Transverse colon (tissue), 4 donors: ENCODE measurements at regions of chr16 and their contacts with region 1.

Region 1: DNA sequence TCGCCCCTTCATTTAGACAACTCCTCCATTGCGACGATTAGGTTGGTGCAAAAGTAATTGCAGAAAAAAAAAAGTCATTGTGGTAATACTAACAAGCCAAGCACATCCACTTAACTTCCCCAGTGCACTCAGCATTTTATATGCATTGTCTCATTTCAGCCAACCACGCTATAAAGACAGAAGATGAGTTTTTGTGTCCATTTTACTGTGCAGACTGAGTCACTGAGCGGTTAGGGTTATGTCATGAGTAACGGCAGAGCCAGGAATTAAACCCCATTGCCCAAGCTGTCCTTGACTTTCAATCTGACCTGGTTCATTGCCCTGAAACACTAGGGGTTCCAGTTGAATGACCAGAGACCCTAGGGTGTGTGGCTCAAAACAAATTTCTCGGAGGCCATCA is 218.7 kb downstream of the XYLT1 start:
- DNase-seq: no peak
- H3K4me3 ChIP-seq: no peak overlapping the region
- H3K27ac ChIP-seq: no peak overlapping the region
- H3K4me1 ChIP-seq: no peaks in the 10 kb centered on the region
- H3K27me3 ChIP-seq: no peaks in the 10 kb centered on the region
- CTCF ChIP-seq: no peak
- EP300 ChIP-seq: no peak
- POLR2A ChIP-seq: no peak

Region 2: DNA sequence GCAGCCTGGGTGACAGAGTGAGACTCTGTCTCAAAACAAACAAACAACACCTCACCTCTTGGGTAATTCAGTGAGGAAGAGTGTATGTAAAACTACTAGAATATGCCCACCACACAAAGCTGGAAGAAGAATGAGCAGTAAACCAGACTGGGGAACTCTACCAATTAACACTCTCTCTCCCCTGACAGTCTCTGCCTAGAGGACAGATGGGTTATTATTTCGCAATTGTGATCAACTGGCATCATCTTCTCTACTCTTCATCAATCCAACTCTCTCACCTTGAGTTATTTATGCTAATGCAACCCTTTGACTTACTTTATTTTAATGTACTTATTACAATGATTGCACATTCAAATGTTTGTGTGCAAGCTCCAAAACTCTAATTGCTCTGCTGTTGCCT is 13.1 kb after region 1 on chr16:
- in situ Hi-C with region 1: no loop called
- intact Hi-C with region 1: loop called (anchors 1 kb)
- DNase-seq: no peak
- H3K4me3 ChIP-seq: no peak overlapping the region
- H3K27ac ChIP-seq: no peak overlapping the region
- H3K4me1 ChIP-seq: peaks cover 7 to 49% (median 39%) of the 10 kb centered on the region in 4 donors
- H3K27me3 ChIP-seq: no peaks in the 10 kb centered on the region
- CTCF ChIP-seq: no peak
- EP300 ChIP-seq: no peak
- POLR2A ChIP-seq: no peak

Region 3: GRCh38 chr16:17602678-17603077 is 350.6 kb after region 1 on chr16:
- in situ Hi-C with region 1: no loop called
- intact Hi-C with region 1: no loop called
- DNase-seq: no peak
- H3K4me3 ChIP-seq: no peak overlapping the region
- H3K27ac ChIP-seq: no peak overlapping the region
- H3K4me1 ChIP-seq: no peaks in the 10 kb centered on the region
- H3K27me3 ChIP-seq: no peaks in the 10 kb centered on the region
- CTCF ChIP-seq: no peak
- EP300 ChIP-seq: no peak
- POLR2A ChIP-seq: no peak

Region 4: GRCh38 chr16:17658881-17659280 is 406.8 kb after region 1 on chr16:
- in situ Hi-C with region 1: no loop called
- intact Hi-C with region 1: no loop called
- DNase-seq: no peak
- H3K4me3 ChIP-seq: no peak overlapping the region
- H3K27ac ChIP-seq: no peak overlapping the region
- H3K4me1 ChIP-seq: no peaks in the 10 kb centered on the region
- H3K27me3 ChIP-seq: no peaks in the 10 kb centered on the region
- CTCF ChIP-seq: no peak
- EP300 ChIP-seq: no peak
- POLR2A ChIP-seq: no peak